AG04449 (cell line): ENCODE measurements at regions of chr13 and their contacts with region 1.

Region 1: DNA sequence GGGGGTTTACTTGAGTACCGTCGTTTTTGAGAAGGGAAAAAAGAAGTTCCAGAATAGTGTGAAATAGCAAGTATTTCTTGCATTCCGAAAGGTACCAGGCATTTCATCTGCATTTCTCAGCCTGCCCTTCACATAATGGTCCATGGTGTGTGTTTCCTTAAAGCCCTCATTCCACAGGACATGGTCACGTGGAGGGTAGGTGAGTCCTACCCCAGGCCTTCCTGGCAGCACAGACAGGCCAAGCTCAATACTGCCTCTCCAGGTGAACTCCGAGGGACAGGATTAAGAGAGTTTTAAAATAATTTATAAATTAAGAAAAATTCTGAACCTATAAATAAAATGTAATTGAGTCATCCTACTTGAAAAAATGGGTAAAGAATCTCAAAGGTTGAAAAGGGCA is 64.7 kb downstream of the TNFRSF19 start:
- DNase-seq: no peak
- H3K4me3 ChIP-seq: no peak overlapping the region
- CTCF ChIP-seq: no peak

Region 2: GRCh38 chr13:23621316-23621645 is 13.6 kb before region 1 on chr13:
- CTCF ChIA-PET with region 1: no interaction called
- POLR2A ChIA-PET with region 1: no interaction called
- DNase-seq: peak; percentile 67
- H3K4me3 ChIP-seq: no peak overlapping the region
- CTCF ChIP-seq: no peak

Region 3: DNA sequence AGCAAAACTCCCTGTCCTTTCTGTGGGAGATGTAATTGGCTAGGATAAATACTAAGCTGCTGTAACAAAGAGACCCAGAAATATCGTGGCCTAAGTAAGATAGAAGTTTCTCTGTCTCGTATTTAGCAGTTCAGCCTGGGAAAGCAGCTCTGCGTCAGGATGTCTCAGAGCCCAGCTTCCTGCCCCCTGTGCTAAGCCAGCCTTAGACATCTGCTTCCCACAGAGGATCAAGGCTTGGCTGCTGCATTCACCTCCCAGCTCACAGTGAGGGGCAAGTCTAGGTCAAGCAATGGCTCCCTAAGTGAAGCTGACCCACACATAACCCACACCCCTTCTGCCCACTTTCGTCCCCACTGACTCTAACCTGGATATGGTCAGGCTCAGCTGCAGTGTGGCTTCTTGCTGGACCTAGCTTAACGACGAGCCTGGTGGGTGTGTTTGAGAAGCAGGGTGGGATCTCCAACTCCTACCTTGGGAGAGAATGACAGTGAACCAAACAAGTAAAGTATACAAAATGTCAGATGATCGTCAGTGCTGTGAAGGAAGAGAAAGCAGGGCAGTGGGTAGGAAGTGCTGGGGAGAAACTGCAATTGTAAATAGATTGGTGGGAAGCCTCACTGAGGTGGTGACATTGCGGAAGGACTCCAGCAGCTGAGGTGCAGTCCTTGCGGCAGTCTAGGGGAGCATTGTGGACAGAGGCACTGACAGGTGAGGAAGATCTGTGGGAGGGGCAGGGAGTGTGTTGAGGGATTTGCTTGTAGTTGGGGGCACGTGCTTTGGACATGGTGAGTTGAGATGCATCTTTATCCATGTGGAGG is 18.2 kb after region 1 on chr13:
- CTCF ChIA-PET with region 1: interaction called, 11 read pairs
- POLR2A ChIA-PET with region 1: no interaction called
- DNase-seq: no peak
- H3K4me3 ChIP-seq: no peak overlapping the region
- CTCF ChIP-seq: no peak